ENCODE measurements at regions of chr12 and their contacts with region 1.

Region 1: GRCh38 chr12:110431957-110432587 is 18.1 kb downstream of the ARPC3 start:
- DNase-seq: no peak
- ATAC-seq: no peak
- H3K4me3 ChIP-seq: peak overlapping the region in 3 of 5 experiments; percentile 37 to 54 (median 51)
- H3K4me3 Mint-ChIP-seq: no peak overlapping the region
- H3K27ac ChIP-seq: peak overlapping the region; percentile 5 to 21
- H3K27ac Mint-ChIP-seq: no peak overlapping the region
- H3K4me1 ChIP-seq: peaks cover 0 to 5% of the 10 kb centered on the region in 2 donors
- H3K4me1 Mint-ChIP-seq: peaks cover 2% of the 10 kb centered on the region
- H3K27me3 ChIP-seq: no peaks in the 10 kb centered on the region
- H3K27me3 Mint-ChIP-seq: no peaks in the 10 kb centered on the region
- CTCF ChIP-seq: no peak

Region 2: GRCh38 chr12:110280779-110281548 is 151.1 kb before region 1 on chr12 and contains the start of gene ATP2A2:
- CTCF ChIA-PET with region 1: interaction called, 14 read pairs
- POLR2A ChIA-PET with region 1: no interaction called
- intact Hi-C with region 1: loop called (anchors 2 kb)
- DNase-seq: peak; percentile 96
- ATAC-seq: peak; percentile 86
- H3K4me3 ChIP-seq: peak within 1 kb of the TSS; percentile 75 to 91 (median 88)
- H3K4me3 Mint-ChIP-seq: peak within 1 kb of the TSS; percentile 98
- H3K27ac ChIP-seq: peak within 1 kb of the TSS; percentile 63 to 84
- H3K27ac Mint-ChIP-seq: peak within 1 kb of the TSS; percentile 97
- H3K4me1 ChIP-seq: peaks cover 26 to 38% of the 10 kb centered on the region in 2 donors
- H3K4me1 Mint-ChIP-seq: peaks cover 45% of the 10 kb centered on the region
- H3K27me3 ChIP-seq: no peaks in the 10 kb centered on the region
- H3K27me3 Mint-ChIP-seq: no peaks in the 10 kb centered on the region
- CTCF ChIP-seq: peak; percentile 10
- total RNA-seq, gene ATP2A2: 68.2 and 73.1 TPM in 2 replicates

Region 3: DNA sequence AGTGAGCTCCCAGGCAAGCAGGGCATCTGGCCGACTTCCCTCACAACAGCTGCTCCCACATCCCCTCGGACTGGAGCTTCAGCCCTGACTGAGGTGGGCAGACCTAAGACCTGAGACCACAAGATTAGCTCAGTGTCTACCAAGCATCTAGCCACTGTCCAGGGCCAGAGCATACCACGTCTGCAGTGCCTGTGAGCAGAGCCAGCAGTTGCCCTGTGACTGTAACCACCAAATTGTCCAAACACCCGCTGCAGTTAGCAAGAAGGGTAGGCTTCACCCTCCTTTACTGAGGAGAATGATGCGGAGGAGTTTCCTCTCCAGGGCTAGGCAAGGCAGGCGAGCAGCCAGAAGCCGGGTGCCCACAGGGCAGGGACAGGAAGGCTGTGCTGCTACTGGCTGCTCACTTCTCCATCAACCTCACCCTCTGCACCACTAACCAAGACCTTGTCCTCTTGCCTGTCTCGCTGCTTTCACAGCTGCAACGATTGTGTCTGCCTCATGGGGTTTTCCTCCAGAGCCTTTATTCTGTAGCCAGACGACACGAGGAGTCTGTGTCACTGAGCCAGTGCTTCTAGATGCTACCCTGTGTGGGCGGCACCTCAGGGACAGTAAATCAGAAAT is 82.4 kb before region 1 on chr12:
- CTCF ChIA-PET with region 1: interaction called, 30 read pairs
- POLR2A ChIA-PET with region 1: interaction called, 4 read pairs
- intact Hi-C with region 1: no loop called
- DNase-seq: peak; percentile 50
- ATAC-seq: peak; percentile 78
- H3K4me3 ChIP-seq: no peak overlapping the region
- H3K4me3 Mint-ChIP-seq: peak overlapping the region; percentile 21
- H3K27ac ChIP-seq: peak overlapping the region in 1 of 2 donors; percentile 26
- H3K27ac Mint-ChIP-seq: peak overlapping the region; percentile 64
- H3K4me1 ChIP-seq: peaks cover 12 to 16% of the 10 kb centered on the region in 2 donors
- H3K4me1 Mint-ChIP-seq: peaks cover 19% of the 10 kb centered on the region
- H3K27me3 ChIP-seq: peaks cover 0 to 2% (median 0%) of the 10 kb centered on the region in 4 experiments
- H3K27me3 Mint-ChIP-seq: no peaks in the 10 kb centered on the region
- CTCF ChIP-seq: no peak

Region 4: GRCh38 chr12:110371408-110372055 is 60.5 kb before region 1 on chr12:
- CTCF ChIA-PET with region 1: interaction called, 11 read pairs
- POLR2A ChIA-PET with region 1: interaction called, 6 read pairs
- intact Hi-C with region 1: no loop called
- DNase-seq: peak; percentile 83
- ATAC-seq: peak; percentile 93
- H3K4me3 ChIP-seq: no peak overlapping the region
- H3K4me3 Mint-ChIP-seq: peak overlapping the region; percentile 49
- H3K27ac ChIP-seq: peak overlapping the region in 1 of 2 donors; percentile 58
- H3K27ac Mint-ChIP-seq: peak overlapping the region; percentile 83
- H3K4me1 ChIP-seq: peaks cover 18 to 30% of the 10 kb centered on the region in 2 donors
- H3K4me1 Mint-ChIP-seq: peaks cover 41% of the 10 kb centered on the region
- H3K27me3 ChIP-seq: no peaks in the 10 kb centered on the region
- H3K27me3 Mint-ChIP-seq: no peaks in the 10 kb centered on the region
- CTCF ChIP-seq: no peak

Region 5: DNA sequence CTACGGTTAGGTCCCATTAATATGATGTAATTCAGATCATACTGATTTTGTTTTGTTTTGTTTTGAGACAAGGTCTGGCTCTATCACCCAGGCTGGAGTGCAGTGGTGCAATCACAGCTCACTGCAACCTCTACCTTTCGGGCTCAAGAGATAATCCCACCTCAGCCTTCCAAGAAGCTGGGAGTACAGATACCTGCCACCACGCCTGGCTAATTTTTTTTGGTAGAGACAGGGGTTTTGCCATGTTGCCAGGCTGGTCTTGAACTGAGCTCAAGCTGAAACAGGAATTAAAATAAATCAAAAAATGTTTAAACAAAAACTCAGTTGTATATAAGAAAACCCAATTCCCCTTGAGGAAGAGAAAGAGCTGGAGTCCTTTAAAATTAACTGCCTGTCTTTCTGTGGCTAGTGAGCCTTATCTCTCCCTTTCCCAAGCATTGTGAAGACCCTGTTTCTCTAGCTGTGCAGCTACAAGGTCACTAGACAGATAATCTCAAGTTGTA is 10.9 kb before region 1 on chr12:
- CTCF ChIA-PET with region 1: interaction called, 23 read pairs
- POLR2A ChIA-PET with region 1: no interaction called
- intact Hi-C with region 1: no loop called
- DNase-seq: no peak
- ATAC-seq: no peak
- H3K4me3 ChIP-seq: no peak overlapping the region
- H3K4me3 Mint-ChIP-seq: no peak overlapping the region
- H3K27ac ChIP-seq: no peak overlapping the region
- H3K27ac Mint-ChIP-seq: no peak overlapping the region
- H3K4me1 ChIP-seq: peaks cover 6 to 9% of the 10 kb centered on the region in 2 donors
- H3K4me1 Mint-ChIP-seq: peaks cover 9% of the 10 kb centered on the region
- H3K27me3 ChIP-seq: no peaks in the 10 kb centered on the region
- H3K27me3 Mint-ChIP-seq: peaks cover 7% of the 10 kb centered on the region
- CTCF ChIP-seq: no peak

Region 6: DNA sequence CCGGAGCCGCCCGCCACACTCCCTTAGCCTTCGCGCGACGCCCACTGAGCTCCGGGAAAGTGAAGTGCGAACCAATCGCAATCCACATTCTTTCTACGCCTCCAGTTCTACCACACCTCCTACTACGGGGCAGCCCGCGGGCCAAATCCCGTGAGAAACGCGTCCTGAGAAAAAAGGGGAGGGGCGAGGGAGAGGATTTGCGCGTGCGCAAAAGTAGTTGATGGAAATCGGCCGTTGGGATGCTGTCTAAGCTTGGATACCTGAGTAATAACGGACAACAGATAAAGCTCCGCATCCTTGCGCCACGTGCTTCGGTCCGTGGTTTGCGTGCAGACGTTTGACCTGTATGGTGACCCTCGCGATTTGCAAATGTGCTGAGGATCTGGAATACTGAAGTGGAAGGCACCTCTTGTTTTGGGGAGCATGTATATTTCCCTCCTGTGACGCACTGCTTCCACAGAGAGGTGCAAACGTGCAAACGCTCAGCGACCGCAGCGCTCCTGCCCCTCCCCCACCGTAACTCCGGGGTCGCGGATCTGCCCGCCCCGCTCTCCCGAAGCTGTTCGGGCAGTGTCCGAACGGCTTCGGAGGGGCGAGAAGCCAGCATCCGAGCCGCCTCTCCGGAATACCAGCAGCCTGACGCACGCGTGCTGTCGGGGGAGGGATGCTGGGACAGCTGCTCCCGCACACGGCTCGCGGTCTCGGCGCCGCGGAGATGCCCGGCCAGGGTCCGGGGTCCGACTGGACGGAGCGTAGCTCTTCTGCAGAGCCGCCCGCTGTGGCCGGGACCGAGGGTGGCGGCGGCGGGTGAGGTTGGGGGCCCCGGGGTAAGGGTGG is 36.4 kb after region 1 on chr12 and contains the starts of genes FAM216A and GPN3:
- CTCF ChIA-PET with region 1: interaction called, 11 read pairs
- POLR2A ChIA-PET with region 1: interaction called, 7 read pairs
- intact Hi-C with region 1: no loop called
- DNase-seq: peak; percentile 97
- ATAC-seq: peak; percentile 91
- H3K4me3 ChIP-seq: peak within 1 kb of the TSS; percentile 72 to 100 (median 95)
- H3K4me3 Mint-ChIP-seq: peak within 1 kb of the TSS; percentile 100
- H3K27ac ChIP-seq: peak within 1 kb of the TSS; percentile 69 to 79
- H3K27ac Mint-ChIP-seq: peak within 1 kb of the TSS; percentile 98
- H3K4me1 ChIP-seq: peaks cover 22 to 24% of the 10 kb centered on the region in 2 donors
- H3K4me1 Mint-ChIP-seq: peaks cover 42% of the 10 kb centered on the region
- H3K27me3 ChIP-seq: no peaks in the 10 kb centered on the region
- H3K27me3 Mint-ChIP-seq: no peaks in the 10 kb centered on the region
- CTCF ChIP-seq: no peak
- total RNA-seq, gene FAM216A: 15.4 and 15.7 TPM in 2 replicates
- total RNA-seq, gene GPN3: 12.3 and 13.4 TPM in 2 replicates

Region 7: DNA sequence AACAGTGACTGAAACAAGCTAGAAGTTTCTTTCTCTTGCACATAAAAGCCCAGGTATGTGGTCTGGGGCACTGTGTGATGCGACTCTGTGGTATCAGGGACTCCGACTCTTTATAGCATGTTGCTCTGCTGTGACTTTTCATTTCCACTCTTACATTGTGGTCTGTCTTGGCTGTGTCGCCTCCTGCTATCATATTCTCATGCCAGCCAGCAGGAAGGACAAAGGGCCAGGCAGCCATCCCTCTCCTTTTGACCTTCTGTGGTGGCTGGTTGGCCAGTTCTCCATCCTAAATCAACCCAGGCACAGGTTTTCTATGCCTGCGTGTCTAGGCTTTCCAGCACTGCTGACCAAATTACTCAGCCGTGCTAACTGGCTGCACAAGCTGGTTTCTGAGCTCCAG is 1261.7 kb after region 1 on chr12:
- CTCF ChIA-PET with region 1: no interaction called
- POLR2A ChIA-PET with region 1: no interaction called
- intact Hi-C with region 1: no loop called
- DNase-seq: no peak
- ATAC-seq: no peak
- H3K4me3 ChIP-seq: no peak overlapping the region
- H3K4me3 Mint-ChIP-seq: no peak overlapping the region
- H3K27ac ChIP-seq: no peak overlapping the region
- H3K27ac Mint-ChIP-seq: no peak overlapping the region
- H3K4me1 ChIP-seq: no peaks in the 10 kb centered on the region
- H3K4me1 Mint-ChIP-seq: no peaks in the 10 kb centered on the region
- H3K27me3 ChIP-seq: no peaks in the 10 kb centered on the region
- H3K27me3 Mint-ChIP-seq: no peaks in the 10 kb centered on the region
- CTCF ChIP-seq: no peak

Measured in B cell (primary cell).